ENCODE measurements at regions of chr11 and their contacts with region 1.

Region 1: DNA sequence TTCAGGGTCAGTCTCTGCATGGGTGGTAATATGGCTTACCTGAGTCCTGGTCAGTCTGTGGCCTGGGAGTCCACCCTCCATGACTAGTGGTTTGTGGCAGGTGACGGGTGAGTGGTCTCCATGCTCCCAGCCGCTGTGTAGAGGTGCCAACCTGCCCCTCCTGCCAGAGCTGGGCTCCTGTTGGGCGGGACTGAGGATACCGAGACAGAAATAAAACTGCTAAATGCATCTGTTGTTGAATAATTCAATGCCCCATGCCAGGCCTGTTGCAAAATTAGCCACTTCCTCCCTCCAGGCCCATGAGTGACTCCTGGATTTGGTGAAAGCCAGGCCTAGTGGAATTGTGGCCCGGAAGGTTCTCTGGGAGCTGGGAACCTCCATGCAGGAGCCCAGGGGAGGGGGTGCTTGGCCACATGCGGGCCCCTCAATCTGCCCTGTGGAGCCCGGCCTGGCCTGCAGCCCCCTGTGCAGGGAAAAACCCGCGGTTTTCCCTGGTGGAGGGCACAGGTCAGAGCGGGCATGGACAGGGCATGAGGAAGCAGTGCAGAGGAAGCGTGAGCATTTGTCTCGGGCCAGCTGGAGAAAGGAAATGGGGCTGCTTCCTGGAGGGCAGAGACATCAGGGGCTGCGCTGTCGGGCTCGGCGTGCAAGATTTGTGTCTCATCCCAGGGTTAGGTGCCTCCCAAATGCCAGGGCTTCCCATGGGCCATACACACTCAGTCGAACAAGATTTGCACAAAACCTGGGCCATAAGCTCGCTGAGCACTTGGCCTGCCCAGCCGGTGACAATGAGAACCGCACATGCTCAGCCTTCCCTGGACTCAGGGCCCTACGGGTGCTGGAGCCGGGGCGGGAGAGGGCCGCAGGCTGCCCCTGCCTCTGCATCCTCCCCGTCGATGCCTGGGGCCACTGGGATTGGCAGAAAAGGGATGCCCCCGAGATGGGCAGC is 66.9 kb downstream of the KCNQ1 start:
- DNase-seq: peak; percentile 50
- ATAC-seq: peak; percentile 66

Region 2: GRCh38 chr11:2377511-2378443 is 133.9 kb before region 1 on chr11:
- intact Hi-C with region 1: no loop called
- DNase-seq: peak; percentile 86
- ATAC-seq: peak; percentile 25

Region 3: GRCh38 chr11:2466869-2467698 is 44.6 kb before region 1 on chr11:
- intact Hi-C with region 1: loop called (anchors 10 kb)
- DNase-seq: no peak
- ATAC-seq: no peak

Region 4: DNA sequence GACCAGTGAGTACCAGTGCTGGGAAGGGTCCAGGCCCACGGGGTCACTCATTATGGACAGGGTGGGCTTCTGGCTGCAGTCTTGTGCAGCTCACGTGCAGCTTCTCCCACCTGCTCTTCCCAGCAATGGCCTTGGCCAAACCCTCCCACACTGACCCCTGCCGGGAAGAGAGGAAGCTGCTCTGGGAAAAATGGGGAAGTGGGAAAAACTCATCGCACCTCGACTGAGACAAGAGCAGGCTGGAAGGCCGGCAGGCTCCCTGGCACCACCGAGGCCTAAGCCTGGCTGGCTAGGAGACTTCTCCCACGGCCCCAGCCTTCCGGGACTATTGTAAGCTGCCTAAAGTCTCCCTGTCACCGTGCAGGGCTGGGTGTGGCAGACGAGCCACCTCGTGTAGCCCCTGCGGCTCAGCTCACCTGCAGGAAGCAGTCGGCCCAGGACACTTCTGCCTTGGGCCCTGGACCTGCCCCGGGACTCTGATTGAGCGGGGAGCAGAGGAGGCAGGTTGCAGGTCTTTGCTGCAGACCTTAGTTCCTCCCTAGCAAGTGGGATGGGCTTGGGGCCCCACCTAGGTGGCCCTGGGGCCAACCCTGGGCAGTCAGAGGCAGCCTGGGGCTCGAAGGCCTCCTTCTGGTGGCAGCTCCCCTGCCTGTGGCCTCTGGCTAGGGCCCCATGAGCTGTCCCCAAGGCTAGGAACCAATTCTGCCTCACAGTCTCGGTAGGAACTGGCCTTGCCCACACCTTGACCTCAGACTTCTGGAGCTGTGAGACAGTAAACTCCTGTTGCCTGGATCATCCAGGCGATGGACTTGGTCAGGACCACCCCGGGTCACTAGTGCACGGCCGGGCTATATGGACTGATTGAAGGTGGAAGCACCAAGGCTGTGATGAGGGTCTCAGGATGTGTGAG is 683.8 kb after region 1 on chr11:
- intact Hi-C with region 1: no loop called
- DNase-seq: no peak
- ATAC-seq: peak; percentile 33

Measured in left ventricle myocardium superior (tissue), 1 donor.